ENCODE measurements at regions of chr11 and their contacts with region 1.

Region 1: DNA sequence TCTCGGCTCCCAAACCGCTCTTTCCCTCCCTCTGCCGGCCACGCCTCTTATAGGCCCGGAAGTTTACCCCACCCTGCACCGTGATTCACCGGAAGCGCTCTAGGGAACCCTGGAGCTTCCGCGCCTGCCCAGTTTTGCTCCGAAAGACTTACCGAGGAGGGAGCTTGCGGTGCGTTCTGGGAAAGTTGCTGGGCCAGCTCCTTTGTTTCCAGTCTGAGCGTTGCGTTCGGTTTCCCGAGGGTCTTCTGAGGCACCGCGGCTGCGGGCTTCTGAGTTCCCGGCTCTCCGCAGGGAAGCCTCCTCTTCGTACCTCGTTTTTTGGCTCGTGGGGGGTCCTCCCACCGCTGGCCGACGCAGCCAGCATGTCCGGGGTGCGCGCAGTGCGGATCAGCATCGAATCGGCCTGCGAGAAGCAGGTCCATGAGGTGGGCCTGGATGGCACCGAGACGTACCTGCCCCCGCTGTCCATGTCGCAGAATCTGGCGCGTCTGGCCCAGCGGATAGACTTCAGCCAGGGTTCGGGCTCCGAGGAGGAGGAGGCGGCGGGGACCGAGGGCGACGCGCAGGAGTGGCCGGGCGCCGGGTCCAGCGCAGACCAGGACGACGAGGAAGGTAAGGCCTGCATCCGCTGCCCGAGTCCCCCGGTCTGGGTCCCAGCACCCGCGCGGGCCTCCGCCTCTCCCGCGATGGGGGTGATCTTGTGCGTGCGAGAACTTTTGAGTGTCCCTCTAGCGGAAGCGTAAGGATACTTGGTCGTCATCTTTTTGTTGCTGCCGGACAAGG is at the start of gene MED17:
- DNase-seq: peak; percentile 64 to 87 (median 85)
- ATAC-seq: peak; percentile 97
- H3K4me3 ChIP-seq: peak within 1 kb of the TSS; percentile 77
- H3K4me3 Mint-ChIP-seq: peak within 1 kb of the TSS; percentile 93 to 100 (median 96)
- H3K27ac ChIP-seq: peak within 1 kb of the TSS; percentile 94
- H3K27ac Mint-ChIP-seq: peak within 1 kb of the TSS; percentile 81 to 97 (median 93)
- H3K4me1 ChIP-seq: peaks cover 22 to 37% of the 10 kb centered on the region in 2 donors
- H3K4me1 Mint-ChIP-seq: peaks cover 34 to 58% (median 48%) of the 10 kb centered on the region in 7 donors
- H3K27me3 ChIP-seq: no peaks in the 10 kb centered on the region
- H3K27me3 Mint-ChIP-seq: no peaks in the 10 kb centered on the region
- total RNA-seq, gene MED17: 47.7 to 75.9 (median 65.6) TPM

Region 2: DNA sequence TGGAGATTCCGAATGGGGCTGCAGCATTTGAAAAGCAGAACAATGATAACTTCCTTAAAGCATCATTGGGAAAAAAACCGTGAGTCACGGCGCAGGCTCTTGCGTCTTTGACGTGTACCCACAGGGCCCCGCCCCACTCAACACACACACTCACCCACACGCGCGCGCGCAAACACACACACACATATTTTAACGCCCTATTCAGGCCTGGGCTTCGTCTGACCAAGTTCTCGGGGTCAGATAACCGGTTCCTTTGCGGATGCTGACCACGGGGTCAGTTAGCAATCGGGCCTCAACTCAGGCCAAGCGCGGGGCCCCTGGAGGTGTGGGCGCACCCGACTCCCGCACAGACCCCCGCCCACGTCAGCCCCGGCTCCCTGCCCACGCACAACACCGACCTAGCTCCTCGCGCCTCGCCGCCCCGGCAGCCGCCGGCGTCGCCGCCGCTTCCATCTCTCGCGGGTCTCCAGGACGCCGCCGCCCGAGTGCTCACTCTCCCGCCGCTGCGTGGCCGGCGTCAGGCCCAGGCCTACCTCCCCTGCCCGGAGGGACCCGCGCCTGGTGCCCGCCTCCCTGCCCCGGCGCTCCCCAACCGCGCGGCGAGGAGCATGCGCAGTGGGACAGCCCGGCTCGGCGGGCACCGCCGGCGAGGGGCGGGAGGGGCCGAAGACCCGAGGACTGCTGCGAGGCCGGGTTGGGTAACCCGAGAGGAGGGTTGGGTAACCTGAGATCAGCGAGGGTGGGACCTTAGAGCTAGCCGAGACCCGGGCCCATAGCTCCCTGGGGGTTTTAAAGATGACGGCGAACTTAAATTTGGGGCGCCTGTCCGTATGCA is 586.7 kb before region 1 on chr11 and contains the start of gene SLC36A4:
- CTCF ChIA-PET with region 1: no interaction called
- POLR2A ChIA-PET with region 1: interaction called, 4 read pairs
- intact Hi-C with region 1: loop called (anchors 1 kb)
- DNase-seq: peak; percentile 78 to 90 (median 88)
- ATAC-seq: peak; percentile 94
- H3K4me3 ChIP-seq: peak within 1 kb of the TSS; percentile 54
- H3K4me3 Mint-ChIP-seq: peak within 1 kb of the TSS; percentile 88 to 98 (median 95)
- H3K27ac ChIP-seq: peak within 1 kb of the TSS; percentile 96
- H3K27ac Mint-ChIP-seq: peak within 1 kb of the TSS; percentile 87 to 99 (median 97)
- H3K4me1 ChIP-seq: peaks cover 0 to 4% of the 10 kb centered on the region in 2 donors
- H3K4me1 Mint-ChIP-seq: peaks cover 15 to 40% (median 30%) of the 10 kb centered on the region in 7 donors
- H3K27me3 ChIP-seq: no peaks in the 10 kb centered on the region
- H3K27me3 Mint-ChIP-seq: peaks cover 0 to 24% (median 5%) of the 10 kb centered on the region in 5 donors
- total RNA-seq, gene SLC36A4: 12.0 to 22.0 (median 20.0) TPM

Region 3: DNA sequence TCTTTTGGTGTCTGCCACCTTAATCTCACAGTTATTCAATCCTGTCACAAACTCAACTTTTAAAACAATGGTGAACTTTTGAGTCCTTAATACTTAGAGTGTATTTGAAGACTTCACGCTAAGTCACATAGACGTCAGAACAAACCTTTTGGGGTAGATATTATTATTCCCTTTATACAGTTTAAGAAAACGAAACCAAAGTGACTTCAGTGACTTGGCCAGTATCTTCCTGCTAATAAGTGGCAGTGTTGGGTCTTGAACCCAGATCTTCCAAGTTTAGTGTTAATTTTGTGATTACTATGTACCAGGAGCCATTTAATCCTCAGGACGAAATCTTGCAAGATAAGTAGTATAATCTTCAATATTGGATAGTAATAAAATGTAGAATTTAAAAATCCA is 122.2 kb before region 1 on chr11:
- CTCF ChIA-PET with region 1: interaction called, 6 read pairs
- POLR2A ChIA-PET with region 1: no interaction called
- intact Hi-C with region 1: loop called (anchors 1 kb)
- DNase-seq: no peak
- ATAC-seq: no peak
- H3K4me3 ChIP-seq: peak overlapping the region; percentile 98
- H3K4me3 Mint-ChIP-seq: peak overlapping the region; percentile 76 to 96 (median 88)
- H3K27ac ChIP-seq: peak overlapping the region; percentile 88
- H3K27ac Mint-ChIP-seq: peak overlapping the region; percentile 60 to 95 (median 90)
- H3K4me1 ChIP-seq: peaks cover 8 to 11% of the 10 kb centered on the region in 2 donors
- H3K4me1 Mint-ChIP-seq: peaks cover 0 to 52% (median 37%) of the 10 kb centered on the region in 7 donors
- H3K27me3 ChIP-seq: no peaks in the 10 kb centered on the region
- H3K27me3 Mint-ChIP-seq: peaks cover 0 to 2% (median 0%) of the 10 kb centered on the region in 5 donors

Region 4: DNA sequence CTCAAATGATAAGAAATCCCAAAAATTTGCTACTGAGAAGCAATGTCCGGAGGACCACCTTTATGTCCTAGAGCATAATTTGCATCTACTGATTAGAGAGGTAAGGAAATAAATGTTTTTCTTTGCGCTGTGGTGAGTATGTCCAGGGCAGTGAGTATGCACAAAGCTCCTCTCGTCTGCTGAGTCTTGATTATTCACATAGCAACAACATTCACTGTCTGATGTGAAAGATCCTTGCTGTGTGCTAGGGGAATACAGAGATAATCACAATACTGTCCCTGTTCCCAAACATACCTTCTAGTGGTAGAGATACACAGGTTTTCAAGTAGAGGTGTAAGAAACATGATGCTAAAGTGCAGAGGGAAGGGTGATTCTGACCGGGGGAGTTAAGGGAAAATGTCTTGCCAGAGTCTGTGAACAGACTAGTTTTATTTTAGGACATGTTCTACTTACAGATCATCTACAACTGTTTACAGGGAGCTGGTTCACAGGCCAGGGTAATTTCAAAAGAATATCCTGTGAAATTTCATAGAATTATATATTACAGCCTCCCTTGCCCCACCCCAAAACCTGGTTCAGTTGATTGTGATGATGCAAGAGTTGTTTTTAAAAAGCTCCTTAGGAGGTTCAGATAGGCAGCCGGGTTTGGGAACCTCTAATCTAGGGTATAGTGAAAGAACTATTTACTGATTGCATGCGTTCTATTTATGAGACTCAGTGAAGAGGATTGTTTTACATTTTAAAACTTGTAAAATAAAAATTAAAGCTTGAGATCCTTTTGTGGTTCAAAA is 12.3 kb after region 1 on chr11:
- CTCF ChIA-PET with region 1: no interaction called
- POLR2A ChIA-PET with region 1: no interaction called
- intact Hi-C with region 1: loop called in 1 of 2 experiments (anchors 2 kb)
- DNase-seq: no peak
- ATAC-seq: no peak
- H3K4me3 ChIP-seq: no peak overlapping the region
- H3K4me3 Mint-ChIP-seq: no peak overlapping the region
- H3K27ac ChIP-seq: no peak overlapping the region
- H3K27ac Mint-ChIP-seq: peak overlapping the region in 2 of 9 donors; percentile 1 to 2
- H3K4me1 ChIP-seq: no peaks in the 10 kb centered on the region
- H3K4me1 Mint-ChIP-seq: peaks cover 0 to 23% (median 7%) of the 10 kb centered on the region in 7 donors
- H3K27me3 ChIP-seq: no peaks in the 10 kb centered on the region
- H3K27me3 Mint-ChIP-seq: no peaks in the 10 kb centered on the region

Region 5: GRCh38 chr11:93838967-93839366 is 54.6 kb after region 1 on chr11:
- CTCF ChIA-PET with region 1: no interaction called
- POLR2A ChIA-PET with region 1: no interaction called
- intact Hi-C with region 1: no loop called
- DNase-seq: no peak
- ATAC-seq: no peak
- H3K4me3 ChIP-seq: no peak overlapping the region
- H3K4me3 Mint-ChIP-seq: no peak overlapping the region
- H3K27ac ChIP-seq: no peak overlapping the region
- H3K27ac Mint-ChIP-seq: no peak overlapping the region
- H3K4me1 ChIP-seq: no peaks in the 10 kb centered on the region
- H3K4me1 Mint-ChIP-seq: no peaks in the 10 kb centered on the region
- H3K27me3 ChIP-seq: no peaks in the 10 kb centered on the region
- H3K27me3 Mint-ChIP-seq: peaks cover 0 to under 1% (median 0%) of the 10 kb centered on the region in 5 donors

Region 6: GRCh38 chr11:94084164-94084563 is 299.8 kb after region 1 on chr11:
- CTCF ChIA-PET with region 1: no interaction called
- POLR2A ChIA-PET with region 1: no interaction called
- intact Hi-C with region 1: no loop called
- DNase-seq: no peak
- ATAC-seq: no peak
- H3K4me3 ChIP-seq: no peak overlapping the region
- H3K4me3 Mint-ChIP-seq: no peak overlapping the region
- H3K27ac ChIP-seq: no peak overlapping the region
- H3K27ac Mint-ChIP-seq: no peak overlapping the region
- H3K4me1 ChIP-seq: no peaks in the 10 kb centered on the region
- H3K4me1 Mint-ChIP-seq: no peaks in the 10 kb centered on the region
- H3K27me3 ChIP-seq: no peaks in the 10 kb centered on the region
- H3K27me3 Mint-ChIP-seq: peaks cover 6 to 50% (median 33%) of the 10 kb centered on the region in 5 donors

Region 7: DNA sequence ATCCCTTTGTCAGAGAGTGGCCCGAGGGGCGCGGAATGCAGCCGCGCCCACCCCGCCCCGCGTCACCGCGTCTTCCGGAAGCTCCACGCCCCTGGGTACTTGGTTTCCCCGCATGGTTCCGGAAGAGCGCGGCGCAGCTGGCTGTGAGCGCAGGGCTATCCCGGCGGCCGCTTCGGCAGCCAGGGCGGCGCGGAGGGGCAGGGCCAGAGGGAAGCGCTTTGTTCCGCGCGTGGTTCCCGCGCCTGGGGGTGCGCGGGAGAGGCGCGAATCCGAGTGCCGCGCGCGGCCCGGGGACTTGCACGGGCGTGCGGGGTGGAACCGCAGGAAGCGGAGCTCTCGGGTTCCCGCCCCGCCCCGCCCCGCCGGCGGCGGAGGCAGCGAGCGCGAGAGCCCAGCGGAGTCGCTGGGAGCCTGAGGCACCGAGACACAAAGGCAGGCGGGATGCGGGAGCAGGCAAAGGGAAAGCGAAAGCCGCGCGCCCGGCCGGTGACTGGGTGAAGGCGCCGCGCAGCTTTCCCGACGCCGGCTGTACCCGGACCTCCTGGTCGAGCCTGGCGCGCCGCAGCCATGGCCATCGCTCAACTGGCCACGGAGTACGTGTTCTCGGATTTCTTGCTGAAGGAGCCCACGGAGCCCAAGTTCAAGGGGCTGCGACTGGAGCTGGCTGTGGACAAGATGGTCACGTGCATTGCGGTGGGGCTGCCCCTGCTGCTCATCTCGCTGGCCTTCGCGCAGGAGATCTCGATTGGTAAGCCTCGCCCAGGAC is 344.6 kb after region 1 on chr11 and contains the start of gene PANX1:
- CTCF ChIA-PET with region 1: no interaction called
- POLR2A ChIA-PET with region 1: interaction called, 4 read pairs
- intact Hi-C with region 1: loop called (anchors 1 to 2 kb)
- DNase-seq: peak; percentile 48 to 80 (median 74)
- ATAC-seq: peak; percentile 87
- H3K4me3 ChIP-seq: peak within 1 kb of the TSS; percentile 97
- H3K4me3 Mint-ChIP-seq: peak within 1 kb of the TSS in 2 of 10 donors; percentile 85 to 92
- H3K27ac ChIP-seq: peak within 1 kb of the TSS; percentile 73
- H3K27ac Mint-ChIP-seq: peak within 1 kb of the TSS; percentile 77 to 96 (median 89)
- H3K4me1 ChIP-seq: peaks cover 21 to 29% of the 10 kb centered on the region in 2 donors
- H3K4me1 Mint-ChIP-seq: peaks cover 18 to 32% (median 27%) of the 10 kb centered on the region in 7 donors
- H3K27me3 ChIP-seq: no peaks in the 10 kb centered on the region
- H3K27me3 Mint-ChIP-seq: no peaks in the 10 kb centered on the region
- total RNA-seq, gene PANX1: 5.6 to 14.8 (median 6.1) TPM

Region 8: DNA sequence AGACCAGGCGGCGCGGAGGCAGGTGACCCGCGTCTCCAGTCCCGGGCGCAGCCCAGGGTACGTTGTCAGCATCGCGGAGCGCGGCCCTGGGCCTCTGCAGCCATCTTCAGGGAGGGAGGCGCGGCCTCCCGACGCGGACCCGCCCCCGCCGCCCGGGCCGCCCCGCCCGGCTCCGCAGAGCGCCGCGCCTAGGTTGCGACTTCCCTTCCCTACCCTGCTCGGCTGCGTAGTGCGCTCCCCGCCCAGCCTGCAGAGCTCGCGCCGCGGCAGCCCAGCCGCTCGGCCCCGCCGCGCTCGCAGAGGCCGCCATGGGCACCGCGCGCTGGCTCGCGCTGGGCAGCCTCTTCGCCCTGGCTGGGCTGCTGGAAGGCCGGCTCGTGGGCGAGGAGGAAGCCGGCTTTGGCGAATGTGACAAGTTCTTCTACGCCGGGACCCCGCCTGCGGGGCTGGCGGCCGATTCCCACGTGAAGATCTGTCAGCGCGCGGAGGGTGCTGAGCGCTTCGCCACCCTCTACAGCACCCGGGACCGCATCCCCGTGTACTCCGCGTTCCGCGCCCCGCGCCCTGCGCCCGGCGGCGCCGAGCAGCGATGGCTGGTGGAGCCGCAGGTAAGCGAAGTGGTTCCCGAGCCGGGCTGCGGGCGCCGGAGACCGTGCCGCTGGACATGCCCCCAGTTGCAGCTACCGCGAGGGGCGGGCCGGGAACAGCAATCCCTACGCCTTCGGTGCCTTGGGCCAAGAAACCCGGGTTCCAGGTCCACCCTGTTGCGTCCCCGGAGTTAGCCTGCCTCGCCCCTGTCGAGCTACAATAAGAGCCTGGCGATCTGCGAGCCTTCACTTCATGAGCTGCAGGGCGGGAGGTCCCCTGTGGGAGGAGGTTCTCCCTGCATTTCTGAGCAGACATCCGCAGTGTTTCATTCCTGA is 1305.5 kb after region 1 on chr11 and contains the start of gene ENDOD1:
- CTCF ChIA-PET with region 1: no interaction called
- POLR2A ChIA-PET with region 1: interaction called, 5 read pairs
- intact Hi-C with region 1: loop called in 1 of 2 experiments (anchors 1 kb)
- DNase-seq: peak; percentile 81 to 89 (median 87)
- ATAC-seq: peak; percentile 98
- H3K4me3 ChIP-seq: peak within 1 kb of the TSS; percentile 79
- H3K4me3 Mint-ChIP-seq: peak within 1 kb of the TSS; percentile 86 to 95 (median 92)
- H3K27ac ChIP-seq: peak within 1 kb of the TSS; percentile 87
- H3K27ac Mint-ChIP-seq: peak within 1 kb of the TSS; percentile 96 to 99 (median 98)
- H3K4me1 ChIP-seq: peaks cover 16 to 31% of the 10 kb centered on the region in 2 donors
- H3K4me1 Mint-ChIP-seq: peaks cover 24 to 61% (median 49%) of the 10 kb centered on the region in 7 donors
- H3K27me3 ChIP-seq: no peaks in the 10 kb centered on the region
- H3K27me3 Mint-ChIP-seq: no peaks in the 10 kb centered on the region
- total RNA-seq, gene ENDOD1: 4.7 to 23.2 (median 8.6) TPM

Measured in naive thymus-derived CD4-positive, alpha-beta T cell (primary cell).